ENCODE measurements at regions of chr1 and their contacts with region 1.

Region 1: GRCh38 chr1:78676347-78676982 is 26.8 kb downstream of the IFI44 start:
- DNase-seq: peak in 1 of 2 donors; percentile 53
- ATAC-seq: peak; percentile 45

Region 2: DNA sequence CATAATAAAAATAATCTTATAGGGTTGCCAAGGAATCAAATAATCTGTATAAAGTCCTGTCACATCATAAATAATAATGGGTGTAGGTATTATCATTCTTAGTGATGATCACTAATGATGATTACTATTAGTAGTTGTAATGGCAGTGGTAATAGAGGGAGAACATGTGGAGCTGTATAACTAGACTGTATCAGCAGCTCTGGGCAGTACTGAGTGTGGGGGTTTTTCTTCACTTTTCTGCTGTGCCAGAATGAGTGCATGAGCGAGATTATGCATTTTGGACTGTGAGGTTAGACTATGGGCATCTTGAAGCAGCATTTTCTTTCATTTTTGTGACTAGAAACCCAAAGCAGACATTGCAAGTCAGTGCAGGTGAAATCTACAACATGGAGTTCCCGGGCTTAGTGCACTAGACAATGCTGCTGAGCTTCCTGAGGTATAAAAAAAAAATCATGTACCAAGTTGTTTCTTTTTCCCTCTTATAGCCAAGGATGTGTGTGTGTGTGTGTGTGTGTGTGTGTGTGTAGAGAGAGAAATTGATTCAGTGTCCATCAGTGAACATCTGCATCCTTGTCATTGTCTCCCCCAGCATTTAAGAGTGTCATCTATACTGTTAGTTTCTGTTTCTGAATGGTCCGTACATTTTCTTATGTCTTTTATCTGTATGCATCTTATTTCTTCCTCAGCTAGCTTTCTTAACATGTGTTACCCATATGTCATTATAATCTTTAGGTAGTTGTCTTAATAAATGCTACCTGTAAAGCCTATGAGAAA is 544.1 kb before region 1 on chr1:
- intact Hi-C with region 1: loop called in 1 of 2 experiments (anchors 10 kb)
- DNase-seq: no peak
- ATAC-seq: no peak

Region 3: GRCh38 chr1:78617615-78618026 is 58.8 kb before region 1 on chr1:
- intact Hi-C with region 1: loop called (anchors 2 to 10 kb)
- DNase-seq: peak; percentile 36 to 47
- ATAC-seq: peak; percentile 85

Measured in left colon (tissue), 2 donors.